Transverse colon (tissue), 4 donors: ENCODE measurements at regions of chr16 and their contacts with region 1.

Region 1: GRCh38 chr16:58129097-58129936 is at the start of gene CFAP20:
- DNase-seq: peak; percentile 99
- H3K4me3 ChIP-seq: peak within 1 kb of the TSS; percentile 62 to 86 (median 84)
- H3K27ac ChIP-seq: peak within 1 kb of the TSS; percentile 90 to 96 (median 92)
- H3K4me1 ChIP-seq: peaks cover 25 to 39% (median 27%) of the 10 kb centered on the region in 4 donors
- H3K27me3 ChIP-seq: no peaks in the 10 kb centered on the region
- CTCF ChIP-seq: no peak
- EP300 ChIP-seq: no peak
- POLR2A ChIP-seq: peak; percentile 94
- total RNA-seq, gene CFAP20: 6.6 to 26.5 (median 21.4) TPM

Region 2: DNA sequence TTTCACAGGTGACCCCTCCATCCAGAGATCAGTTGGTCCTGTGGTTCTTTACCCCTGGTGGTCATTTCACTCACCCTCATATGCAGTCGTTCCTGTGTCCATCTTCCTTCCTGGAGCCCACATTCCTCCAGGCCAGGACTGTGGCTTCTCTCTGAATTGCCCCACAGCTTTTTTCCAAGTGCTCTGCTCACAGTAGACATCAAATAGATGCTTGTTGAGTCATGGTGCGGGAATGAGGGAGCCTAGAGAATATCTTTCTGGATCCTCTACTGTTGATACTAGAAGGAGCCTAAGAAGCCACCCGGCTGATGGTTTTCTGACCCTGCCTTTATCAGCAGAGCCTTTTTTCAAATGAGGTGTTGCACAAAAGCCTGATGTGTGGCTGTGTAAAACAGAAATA is 117.7 kb before region 1 on chr16:
- in situ Hi-C with region 1: loop called in 1 of 4 experiments (anchors 10 kb)
- intact Hi-C with region 1: no loop called
- DNase-seq: no peak
- H3K4me3 ChIP-seq: no peak overlapping the region
- H3K27ac ChIP-seq: no peak overlapping the region
- H3K4me1 ChIP-seq: no peaks in the 10 kb centered on the region
- H3K27me3 ChIP-seq: no peaks in the 10 kb centered on the region
- CTCF ChIP-seq: no peak
- EP300 ChIP-seq: no peak
- POLR2A ChIP-seq: no peak

Region 3: DNA sequence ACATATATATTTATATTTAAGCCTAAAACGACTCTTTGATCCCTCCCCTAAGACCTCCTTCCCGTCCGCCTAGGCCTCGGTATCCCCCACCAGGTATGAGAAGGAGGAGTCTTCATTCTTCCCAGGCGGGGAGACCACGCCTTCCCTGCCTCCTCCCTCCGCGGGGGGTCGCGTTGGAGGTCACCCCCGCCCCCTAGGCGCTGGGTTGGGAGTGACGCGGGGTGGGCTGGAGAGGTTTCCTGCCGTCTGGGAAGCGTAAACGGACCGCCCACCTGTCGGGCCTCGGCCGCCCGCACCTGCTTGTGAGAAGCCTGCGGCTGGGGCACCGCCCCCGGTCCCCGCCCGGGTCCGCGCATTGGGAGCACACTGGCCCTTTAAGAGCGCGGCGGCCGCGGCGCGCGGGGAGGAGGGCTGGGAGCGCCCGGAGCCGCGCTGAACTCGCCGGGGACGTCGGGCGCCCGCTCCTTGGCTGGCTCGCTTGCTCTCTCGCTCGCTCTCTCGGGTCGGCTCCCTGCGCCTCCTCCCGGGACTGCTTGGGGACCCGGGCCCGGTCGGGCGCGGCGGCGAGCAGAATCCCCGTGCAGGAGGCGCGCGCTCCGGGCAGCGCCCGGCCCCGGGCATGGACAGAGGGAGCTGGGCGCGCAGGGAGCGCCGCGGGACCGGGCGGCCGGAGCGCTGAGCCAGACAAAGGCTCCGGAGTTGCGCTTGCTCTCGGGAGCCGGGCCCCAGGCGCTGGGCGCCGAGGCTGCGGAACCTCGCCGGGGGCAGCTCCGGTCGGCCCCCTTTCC is 103.8 kb before region 1 on chr16 and contains the start of gene MMP15:
- in situ Hi-C with region 1: loop called in 2 of 4 experiments (anchors 5 to 10 kb)
- intact Hi-C with region 1: loop called (anchors 5 kb)
- DNase-seq: peak; percentile 94
- H3K4me3 ChIP-seq: peak within 1 kb of the TSS; percentile 71 to 95 (median 88)
- H3K27ac ChIP-seq: peak within 1 kb of the TSS; percentile 92 to 97 (median 95)
- H3K4me1 ChIP-seq: peaks cover 31 to 73% (median 59%) of the 10 kb centered on the region in 4 donors
- H3K27me3 ChIP-seq: no peaks in the 10 kb centered on the region
- CTCF ChIP-seq: no peak
- EP300 ChIP-seq: no peak
- POLR2A ChIP-seq: peak; percentile 43
- total RNA-seq, gene MMP15: 48.0 to 161 (median 92.3) TPM

Region 4: GRCh38 chr16:58198022-58198683 is 68.8 kb after region 1 on chr16 and contains the start of gene CSNK2A2:
- in situ Hi-C with region 1: no loop called
- intact Hi-C with region 1: loop called (anchors 5 kb)
- DNase-seq: peak; percentile 78
- H3K4me3 ChIP-seq: peak within 1 kb of the TSS; percentile 70 to 93 (median 83)
- H3K27ac ChIP-seq: peak within 1 kb of the TSS in 3 of 4 donors; percentile 53 to 70 (median 63)
- H3K4me1 ChIP-seq: peaks cover 5 to 26% (median 17%) of the 10 kb centered on the region in 4 donors
- H3K27me3 ChIP-seq: no peaks in the 10 kb centered on the region
- CTCF ChIP-seq: peak in 2 of 5 experiments; percentile 35 to 41
- EP300 ChIP-seq: no peak
- POLR2A ChIP-seq: no peak
- total RNA-seq, gene CSNK2A2: 28.7 to 53.5 (median 40.0) TPM